ENCODE measurements at regions of chr2 and their contacts with region 1.

Region 1: DNA sequence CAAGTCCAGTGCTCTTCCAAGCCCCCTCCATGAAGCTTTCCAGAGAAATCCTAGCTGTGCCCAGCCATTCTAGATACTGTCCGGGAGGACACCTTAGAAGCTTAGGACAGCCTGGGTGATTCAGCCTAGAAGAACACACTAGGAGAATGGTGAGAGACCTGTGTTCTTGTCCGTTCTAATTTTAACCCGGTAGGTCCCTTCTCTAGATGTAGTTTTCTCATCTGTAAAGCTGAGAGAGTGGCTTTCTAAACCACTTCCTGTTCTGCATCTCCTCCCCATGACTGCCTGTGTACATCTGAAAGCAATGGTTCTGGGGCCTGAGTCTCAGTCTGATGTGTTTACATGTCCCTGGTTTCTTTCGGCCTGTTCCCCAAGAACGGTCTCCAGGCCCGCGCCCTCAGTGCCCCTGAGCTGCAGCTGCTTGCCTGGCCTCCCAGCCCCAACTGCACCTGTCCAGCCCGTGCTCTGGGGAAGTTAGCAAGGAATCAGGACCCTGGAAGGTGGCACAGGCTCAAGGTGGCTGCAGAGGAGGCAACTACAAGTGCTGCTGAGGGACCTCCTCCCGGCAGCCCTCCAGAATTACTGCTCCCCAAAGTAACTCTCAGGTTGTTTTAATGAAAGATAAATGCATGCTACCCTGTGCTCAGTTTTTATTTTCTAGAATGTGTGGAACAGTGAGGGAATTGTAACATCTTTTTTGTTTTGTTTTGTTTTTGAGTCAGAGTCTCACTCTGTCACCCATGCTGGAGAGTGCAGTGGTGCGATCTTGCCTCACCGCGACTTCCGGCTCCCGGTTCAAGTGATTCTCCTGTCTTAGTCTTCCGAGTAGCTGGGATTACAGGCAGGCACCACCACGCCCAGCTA is 105.9 kb downstream of the LBH start:
- DNase-seq: peak; percentile 11 to 74 (median 69)
- ATAC-seq: peak; percentile 89
- H3K4me3 ChIP-seq: peak overlapping the region; percentile 46
- H3K4me3 Mint-ChIP-seq: peak overlapping the region; percentile 69 to 92 (median 85)
- H3K27ac ChIP-seq: peak overlapping the region; percentile 71
- H3K27ac Mint-ChIP-seq: peak overlapping the region; percentile 95 to 100 (median 98)
- H3K4me1 ChIP-seq: peaks cover 60 to 71% of the 10 kb centered on the region in 2 donors
- H3K4me1 Mint-ChIP-seq: peaks cover 57 to 87% (median 84%) of the 10 kb centered on the region in 7 donors
- H3K27me3 ChIP-seq: no peaks in the 10 kb centered on the region
- H3K27me3 Mint-ChIP-seq: no peaks in the 10 kb centered on the region

Region 2: GRCh38 chr2:30208452-30208851 is 128.8 kb before region 1 on chr2:
- CTCF ChIA-PET with region 1: interaction called, 46 read pairs
- POLR2A ChIA-PET with region 1: interaction called, 12 read pairs
- intact Hi-C with region 1: loop called in 1 of 2 experiments (anchors 1 kb)
- DNase-seq: peak in 4 of 9 donors; percentile 19 to 42 (median 28)
- ATAC-seq: peak; percentile 69
- H3K4me3 ChIP-seq: peak overlapping the region; percentile 3
- H3K4me3 Mint-ChIP-seq: peak overlapping the region; percentile 14 to 80 (median 68)
- H3K27ac ChIP-seq: peak overlapping the region; percentile 25
- H3K27ac Mint-ChIP-seq: peak overlapping the region in 8 of 9 donors; percentile 82 to 95 (median 88)
- H3K4me1 ChIP-seq: peaks cover 8 to 33% of the 10 kb centered on the region in 2 donors
- H3K4me1 Mint-ChIP-seq: peaks cover 14 to 44% (median 35%) of the 10 kb centered on the region in 7 donors
- H3K27me3 ChIP-seq: no peaks in the 10 kb centered on the region
- H3K27me3 Mint-ChIP-seq: peaks cover 0 to 7% (median 0%) of the 10 kb centered on the region in 5 donors

Region 3: GRCh38 chr2:30252723-30253701 is 84.2 kb before region 1 on chr2:
- CTCF ChIA-PET with region 1: interaction called, 5 read pairs
- POLR2A ChIA-PET with region 1: interaction called, 11 read pairs
- intact Hi-C with region 1: loop called in 1 of 2 experiments (anchors 1 kb)
- DNase-seq: peak in 4 of 9 donors; percentile 38 to 83 (median 53)
- ATAC-seq: peak; percentile 36
- H3K4me3 ChIP-seq: no peak overlapping the region
- H3K4me3 Mint-ChIP-seq: peak overlapping the region; percentile 53 to 79 (median 72)
- H3K27ac ChIP-seq: peak overlapping the region; percentile 86
- H3K27ac Mint-ChIP-seq: peak overlapping the region; percentile 72 to 100 (median 97)
- H3K4me1 ChIP-seq: peaks cover 77 to 93% of the 10 kb centered on the region in 2 donors
- H3K4me1 Mint-ChIP-seq: peaks cover 65 to 99% (median 97%) of the 10 kb centered on the region in 7 donors
- H3K27me3 ChIP-seq: no peaks in the 10 kb centered on the region
- H3K27me3 Mint-ChIP-seq: no peaks in the 10 kb centered on the region

Region 4: DNA sequence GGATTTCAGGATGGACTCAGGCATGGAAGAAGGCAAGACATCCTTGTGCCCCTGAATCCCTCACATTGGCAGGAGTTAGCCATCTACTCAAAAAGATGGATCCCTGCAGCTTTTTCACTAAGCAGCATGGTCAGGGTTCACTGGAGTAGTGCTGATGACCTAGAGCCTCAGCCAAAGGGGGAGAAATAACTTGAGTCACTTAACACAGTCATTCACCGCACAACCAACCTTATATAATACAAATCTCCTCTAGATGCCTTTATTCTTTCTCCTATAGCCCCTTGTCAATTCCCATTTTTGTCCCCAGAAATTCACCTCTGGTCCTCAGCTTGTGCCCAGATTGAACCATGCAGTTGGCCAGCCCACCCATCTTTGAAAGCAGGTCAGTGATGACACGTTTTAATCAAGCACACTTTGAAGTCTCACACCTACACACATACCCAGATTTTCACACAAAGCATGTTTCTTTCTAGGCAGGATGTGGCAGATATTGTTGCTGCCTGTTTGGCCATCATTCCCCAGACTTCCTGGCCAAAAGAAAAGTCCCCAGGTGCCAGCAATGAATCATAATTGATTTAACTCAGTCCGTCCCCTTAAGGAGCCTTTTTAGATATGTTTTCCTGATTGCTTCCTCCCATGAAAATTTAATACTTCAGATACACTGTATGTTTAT is 21.7 kb before region 1 on chr2:
- CTCF ChIA-PET with region 1: no interaction called
- POLR2A ChIA-PET with region 1: interaction called, 4 read pairs
- intact Hi-C with region 1: loop called (anchors 1 to 2 kb)
- DNase-seq: peak in 6 of 9 donors; percentile 22 to 51 (median 43)
- ATAC-seq: peak; percentile 81
- H3K4me3 ChIP-seq: no peak overlapping the region
- H3K4me3 Mint-ChIP-seq: peak overlapping the region; percentile 24 to 81 (median 71)
- H3K27ac ChIP-seq: peak overlapping the region; percentile 24
- H3K27ac Mint-ChIP-seq: peak overlapping the region; percentile 75 to 97 (median 91)
- H3K4me1 ChIP-seq: peaks cover 15 to 40% of the 10 kb centered on the region in 2 donors
- H3K4me1 Mint-ChIP-seq: peaks cover 35 to 65% (median 61%) of the 10 kb centered on the region in 7 donors
- H3K27me3 ChIP-seq: no peaks in the 10 kb centered on the region
- H3K27me3 Mint-ChIP-seq: no peaks in the 10 kb centered on the region

Region 5: GRCh38 chr2:30421604-30422443 is 84.6 kb after region 1 on chr2:
- CTCF ChIA-PET with region 1: interaction called, 10 read pairs
- POLR2A ChIA-PET with region 1: interaction called, 10 read pairs
- intact Hi-C with region 1: loop called (anchors 1 to 2 kb)
- DNase-seq: peak in 5 of 9 donors; percentile 24 to 68 (median 44)
- ATAC-seq: peak; percentile 10
- H3K4me3 ChIP-seq: peak overlapping the region; percentile 32
- H3K4me3 Mint-ChIP-seq: peak overlapping the region; percentile 41 to 76 (median 70)
- H3K27ac ChIP-seq: peak overlapping the region; percentile 70
- H3K27ac Mint-ChIP-seq: peak overlapping the region; percentile 91 to 98 (median 93)
- H3K4me1 ChIP-seq: peaks cover 24 to 48% of the 10 kb centered on the region in 2 donors
- H3K4me1 Mint-ChIP-seq: peaks cover 35 to 64% (median 54%) of the 10 kb centered on the region in 7 donors
- H3K27me3 ChIP-seq: no peaks in the 10 kb centered on the region
- H3K27me3 Mint-ChIP-seq: no peaks in the 10 kb centered on the region

Measured in naive thymus-derived CD4-positive, alpha-beta T cell (primary cell).